GM10248 (cell line): ENCODE measurements at regions of chr10 and their contacts with region 1.

Region 1: DNA sequence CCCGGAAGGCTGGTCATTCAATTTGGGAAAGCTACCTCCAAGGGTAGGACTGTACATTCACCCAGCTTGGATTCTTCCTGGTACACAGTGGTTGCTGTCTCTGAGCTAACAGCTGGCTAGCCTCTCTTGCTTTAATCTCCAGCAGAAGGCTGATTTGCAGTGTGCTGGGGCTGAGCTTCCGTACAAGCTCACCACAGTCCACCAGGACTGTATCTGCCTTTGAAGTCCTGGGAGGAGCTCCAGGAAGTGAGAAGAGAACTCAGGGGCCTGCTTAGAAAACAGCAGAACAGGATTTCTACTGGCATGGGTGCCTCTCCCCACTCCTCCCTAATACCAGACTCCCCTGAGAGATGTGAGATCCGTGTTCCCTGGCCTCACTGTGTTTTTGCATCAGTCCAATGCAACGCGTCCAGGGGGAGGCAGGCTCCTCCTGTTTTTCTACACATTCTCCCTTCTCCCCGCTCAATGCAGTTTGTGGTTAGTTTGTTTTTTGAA is 6.6 kb downstream of the AFAP1L2 start:
- DNase-seq: no peak
- CTCF ChIP-seq: no peak

Region 2: GRCh38 chr10:114379631-114380041 is 18.1 kb before region 1 on chr10:
- CTCF ChIA-PET with region 1: interaction called, 11 read pairs
- POLR2A ChIA-PET with region 1: interaction called, 5 read pairs
- DNase-seq: no peak
- CTCF ChIP-seq: no peak